Keratinocyte (primary cell): ENCODE measurements at regions of chr12 and their contacts with region 1.

Region 1: GRCh38 chr12:15842108-15842507 is 40.1 kb upstream of the STRAP start:
- DNase-seq: no peak
- H3K4me3 ChIP-seq: no peak overlapping the region
- H3K27ac ChIP-seq: no peak overlapping the region
- H3K4me1 ChIP-seq: no peaks in the 10 kb centered on the region
- H3K27me3 ChIP-seq: no peaks in the 10 kb centered on the region
- CTCF ChIP-seq: no peak

Region 2: GRCh38 chr12:15472036-15472435 is 370.1 kb before region 1 on chr12:
- dilution Hi-C with region 1: no loop called
- DNase-seq: peak; percentile 17
- H3K4me3 ChIP-seq: no peak overlapping the region
- H3K27ac ChIP-seq: no peak overlapping the region
- H3K4me1 ChIP-seq: no peaks in the 10 kb centered on the region
- H3K27me3 ChIP-seq: no peaks in the 10 kb centered on the region
- CTCF ChIP-seq: no peak

Region 3: GRCh38 chr12:15590180-15590826 is 251.8 kb before region 1 on chr12:
- dilution Hi-C with region 1: loop called (anchors 25 kb)
- DNase-seq: no peak
- H3K4me3 ChIP-seq: peak overlapping the region; percentile 1 to 72 (median 63)
- H3K27ac ChIP-seq: peak overlapping the region; percentile 17
- H3K4me1 ChIP-seq: peaks cover 8% of the 10 kb centered on the region
- H3K27me3 ChIP-seq: no peaks in the 10 kb centered on the region
- CTCF ChIP-seq: peak; percentile 77 to 90 (median 83)

Region 4: DNA sequence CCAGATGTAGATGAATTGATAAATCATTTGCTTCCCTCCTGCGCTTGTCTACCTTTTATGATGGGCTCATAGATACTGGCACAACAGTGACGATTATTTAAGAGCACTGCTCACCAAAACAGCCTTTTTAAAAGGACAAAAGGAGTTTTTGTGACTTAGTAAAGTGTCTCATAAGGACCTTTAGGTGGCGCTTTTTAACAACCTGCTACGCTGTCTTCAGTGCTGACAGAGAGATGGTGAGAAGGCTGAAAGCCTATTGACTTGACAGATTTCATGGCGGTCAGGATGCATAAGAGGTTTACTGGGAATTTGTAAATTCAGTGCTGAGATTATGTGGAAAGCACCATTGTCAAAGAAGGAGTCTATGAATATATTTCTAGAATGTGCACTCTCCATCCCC is 347.7 kb after region 1 on chr12:
- dilution Hi-C with region 1: no loop called
- DNase-seq: no peak
- H3K4me3 ChIP-seq: no peak overlapping the region
- H3K27ac ChIP-seq: no peak overlapping the region
- H3K4me1 ChIP-seq: no peaks in the 10 kb centered on the region
- H3K27me3 ChIP-seq: no peaks in the 10 kb centered on the region
- CTCF ChIP-seq: peak in 2 of 3 experiments; percentile 10 to 41